Activated CD4-positive, alpha-beta T cell treated with anti-CD3 and anti-CD28 coated beads, Interleukin-2, amount 10 ng/mL, durations not matched to agents 24 days and 14 days (primary cell): ENCODE measurements at regions of chr22 and their contacts with region 1.

Region 1: GRCh38 chr22:43385770-43386641 is 25.8 kb upstream of the MPPED1 start:
- DNase-seq: peak; percentile 92
- H3K4me3 Mint-ChIP-seq: no peak overlapping the region
- H3K27ac Mint-ChIP-seq: no peak overlapping the region
- H3K4me1 Mint-ChIP-seq: peaks cover 7% of the 10 kb centered on the region
- H3K27me3 Mint-ChIP-seq: peaks cover 32% of the 10 kb centered on the region

Region 2: DNA sequence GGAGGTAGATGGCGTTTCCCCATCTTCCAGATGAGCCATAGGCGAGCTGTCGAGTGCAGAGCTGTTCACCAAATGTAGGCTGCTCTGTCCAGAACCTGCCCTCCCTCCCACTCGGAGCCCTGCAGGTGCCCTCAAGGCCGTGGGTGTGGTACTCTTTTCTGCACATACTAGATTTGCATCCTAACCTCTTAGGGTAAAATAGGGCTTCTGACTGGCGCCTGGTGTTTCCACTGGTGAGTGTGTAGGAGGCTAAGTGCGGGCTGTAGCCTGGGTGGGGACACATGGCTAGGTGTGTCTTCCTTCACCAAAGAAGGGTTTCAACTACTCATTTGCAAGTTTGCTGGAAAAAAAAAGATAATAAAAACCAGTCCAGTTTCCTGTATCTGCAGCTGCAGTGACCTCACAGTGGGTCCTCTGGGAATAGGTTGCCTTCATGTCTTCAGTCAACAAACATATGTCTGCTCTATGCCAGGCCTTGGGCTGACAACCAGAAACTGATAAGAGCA is 267.0 kb before region 1 on chr22:
- intact Hi-C with region 1: no loop called
- DNase-seq: no peak
- H3K4me3 Mint-ChIP-seq: no peak overlapping the region
- H3K27ac Mint-ChIP-seq: no peak overlapping the region
- H3K4me1 Mint-ChIP-seq: peaks cover 5% of the 10 kb centered on the region
- H3K27me3 Mint-ChIP-seq: peaks cover 2% of the 10 kb centered on the region

Region 3: DNA sequence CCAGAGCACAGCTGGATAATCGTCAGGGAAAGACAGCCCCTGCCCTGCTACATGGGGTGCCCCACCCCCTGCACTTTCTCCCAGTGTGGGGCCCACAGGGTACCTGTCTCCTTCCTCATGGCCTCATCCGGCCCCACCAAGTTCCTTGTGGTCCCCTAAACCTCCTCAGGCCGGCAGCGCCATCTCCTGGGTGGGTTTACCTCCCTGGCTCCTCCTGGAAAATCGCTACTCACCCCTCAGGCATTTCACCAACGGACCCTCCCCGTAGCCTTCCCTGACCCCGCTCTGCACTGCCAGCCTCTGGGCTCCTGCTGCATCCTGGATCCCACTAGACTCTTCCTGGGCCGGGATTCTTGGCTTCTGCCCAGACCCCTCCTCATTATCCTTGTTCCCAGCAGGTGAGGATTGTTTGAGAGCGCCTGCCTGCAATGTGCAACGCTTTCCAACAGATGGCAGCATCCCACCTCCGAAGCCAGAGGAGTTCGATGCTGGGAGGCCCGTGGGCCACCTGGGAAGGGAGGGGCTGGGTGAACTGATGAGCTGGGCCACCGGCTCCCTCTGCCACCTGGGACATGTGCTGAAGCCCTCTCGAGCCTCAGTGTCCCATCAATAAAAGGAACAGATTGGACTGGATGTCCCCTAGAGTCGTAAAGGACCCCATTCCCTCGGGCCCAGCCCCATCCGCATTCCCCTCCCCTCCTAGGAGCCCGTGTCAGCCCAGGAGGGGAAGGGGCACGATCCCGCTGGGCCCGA is 154.9 kb before region 1 on chr22:
- intact Hi-C with region 1: loop called (anchors 1 kb)
- DNase-seq: peak; percentile 92
- H3K4me3 Mint-ChIP-seq: no peak overlapping the region
- H3K27ac Mint-ChIP-seq: peak overlapping the region; percentile 53
- H3K4me1 Mint-ChIP-seq: peaks cover 7% of the 10 kb centered on the region
- H3K27me3 Mint-ChIP-seq: no peaks in the 10 kb centered on the region

Region 4: DNA sequence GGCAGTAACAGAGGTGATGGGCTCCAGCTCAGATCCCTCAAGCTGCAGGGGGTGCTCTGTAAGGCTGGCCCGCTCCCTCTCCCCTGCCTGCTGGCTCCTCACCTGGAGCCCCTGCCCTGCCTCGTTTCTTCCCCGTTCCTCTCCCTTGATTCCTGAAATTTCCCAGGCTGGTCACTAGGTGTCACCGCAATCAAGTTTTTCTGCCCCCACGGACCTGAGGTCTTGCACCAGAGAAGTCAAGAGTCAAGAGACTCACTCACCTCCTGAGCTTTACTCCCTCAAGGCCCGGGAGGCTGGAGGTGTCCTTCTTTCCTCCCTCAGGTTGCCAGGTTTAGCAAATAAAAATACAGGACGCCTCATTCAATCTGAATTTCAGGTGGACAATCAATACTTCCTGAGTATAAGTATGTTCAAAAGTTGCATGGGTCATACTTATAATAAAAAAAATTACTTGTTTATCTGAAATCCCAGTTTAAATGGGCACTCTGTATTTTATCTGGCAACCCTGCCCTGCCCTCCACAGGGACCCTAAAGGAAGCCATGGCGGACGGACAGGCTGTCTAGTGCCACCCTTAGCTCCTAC is 112.0 kb before region 1 on chr22:
- intact Hi-C with region 1: loop called (anchors 1 kb)
- DNase-seq: peak; percentile 82
- H3K4me3 Mint-ChIP-seq: no peak overlapping the region
- H3K27ac Mint-ChIP-seq: no peak overlapping the region
- H3K4me1 Mint-ChIP-seq: peaks cover 14% of the 10 kb centered on the region
- H3K27me3 Mint-ChIP-seq: peaks cover 2% of the 10 kb centered on the region

Region 5: GRCh38 chr22:43346521-43346929 is 39.5 kb before region 1 on chr22:
- intact Hi-C with region 1: loop called (anchors 1 kb)
- DNase-seq: peak; percentile 91
- H3K4me3 Mint-ChIP-seq: no peak overlapping the region
- H3K27ac Mint-ChIP-seq: no peak overlapping the region
- H3K4me1 Mint-ChIP-seq: peaks cover 12% of the 10 kb centered on the region
- H3K27me3 Mint-ChIP-seq: peaks cover 22% of the 10 kb centered on the region

Region 6: DNA sequence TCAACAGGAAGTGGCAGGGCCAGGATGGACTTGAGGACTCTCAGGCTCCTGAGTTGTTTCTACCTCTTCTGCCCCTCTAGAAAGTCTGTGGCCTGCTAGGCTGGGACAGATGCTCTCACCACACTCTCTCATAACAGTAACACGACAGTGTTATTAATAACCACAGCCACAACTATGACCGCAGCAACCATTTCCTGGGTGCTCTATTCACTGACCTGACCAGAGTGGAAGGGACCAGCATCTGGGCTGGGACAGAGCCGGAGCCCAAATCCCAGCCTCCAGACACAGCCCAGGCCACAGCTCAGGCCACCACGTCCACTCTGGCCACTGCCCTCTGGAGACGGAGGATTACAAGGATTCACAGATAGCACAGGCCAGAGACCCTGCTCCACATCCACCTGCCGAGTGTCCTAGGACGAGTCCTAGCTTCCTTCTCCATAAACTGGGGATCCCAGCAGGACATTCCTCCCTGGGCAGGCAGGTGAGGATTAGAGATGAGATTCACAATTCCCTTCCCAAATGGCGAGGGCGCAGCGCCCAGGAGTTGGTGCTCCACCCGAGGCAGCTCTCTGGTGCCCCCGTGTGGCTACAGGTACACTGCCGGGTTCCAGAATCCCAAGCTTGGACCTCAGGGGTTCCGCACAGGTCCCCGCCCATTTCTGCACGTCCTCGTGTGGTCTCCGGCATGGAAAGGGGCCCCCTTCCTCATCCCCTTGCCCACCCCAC is 498.8 kb after region 1 on chr22:
- intact Hi-C with region 1: loop called (anchors 5 kb)
- DNase-seq: peak; percentile 83
- H3K4me3 Mint-ChIP-seq: no peak overlapping the region
- H3K27ac Mint-ChIP-seq: peak overlapping the region; percentile 20
- H3K4me1 Mint-ChIP-seq: no peaks in the 10 kb centered on the region
- H3K27me3 Mint-ChIP-seq: peaks cover 8% of the 10 kb centered on the region

Region 7: GRCh38 chr22:44625981-44626687 is 1240.1 kb after region 1 on chr22:
- intact Hi-C with region 1: loop called (anchors 10 kb)
- DNase-seq: peak; percentile 94
- H3K4me3 Mint-ChIP-seq: no peak overlapping the region
- H3K27ac Mint-ChIP-seq: no peak overlapping the region
- H3K4me1 Mint-ChIP-seq: peaks cover 4% of the 10 kb centered on the region
- H3K27me3 Mint-ChIP-seq: peaks cover 3% of the 10 kb centered on the region